CD4-positive, alpha-beta memory T cell (primary cell): ENCODE measurements at regions of chr12 and their contacts with region 1.

Region 1: DNA sequence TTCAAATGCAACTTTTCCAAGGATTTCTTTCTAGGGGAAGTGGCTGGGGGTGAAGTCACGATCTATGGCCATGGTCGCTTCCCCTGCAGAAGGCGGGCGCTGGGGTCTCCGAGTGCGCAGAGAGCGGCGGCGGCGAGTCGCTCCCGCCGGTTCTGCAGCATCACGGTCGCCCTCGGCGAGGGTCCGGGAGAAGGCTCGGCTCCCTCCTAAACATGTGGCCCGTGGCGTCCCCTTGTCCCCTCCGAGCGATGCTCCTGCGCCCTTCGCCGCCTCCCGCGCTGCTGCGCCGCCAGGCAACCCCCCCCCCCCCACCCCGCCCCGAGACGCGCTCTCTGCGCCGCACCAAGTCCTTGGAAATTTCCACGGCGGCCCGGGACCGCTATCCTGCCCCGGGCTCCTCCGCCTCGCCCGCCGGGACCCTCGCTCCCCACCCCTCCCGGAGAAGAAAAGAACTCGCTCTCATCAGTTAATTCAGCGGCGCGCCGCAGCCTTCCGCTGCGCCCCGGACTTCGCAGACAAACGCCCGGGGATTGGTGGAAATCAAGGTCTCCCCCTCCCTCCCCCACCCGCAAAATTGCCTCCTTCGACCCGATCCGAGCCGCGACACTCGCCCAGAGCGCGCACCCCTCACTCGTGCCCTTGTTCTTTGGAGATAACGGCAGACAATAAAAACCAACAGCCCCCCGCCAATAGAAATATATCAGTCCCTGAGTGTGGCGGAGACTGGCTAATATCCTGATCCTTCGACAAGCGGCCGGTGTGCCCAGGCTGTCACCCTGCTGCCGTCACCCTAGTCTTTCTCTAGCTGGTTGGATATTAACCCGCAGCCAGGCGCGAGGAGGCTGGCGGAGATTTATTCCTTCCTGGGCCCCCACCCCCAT is at the start of gene ST8SIA1:
- DNase-seq: peak; percentile 72 to 80 (median 75)
- H3K4me3 ChIP-seq: peak within 1 kb of the TSS; percentile 71 to 93
- H3K4me3 Mint-ChIP-seq: peak within 1 kb of the TSS; percentile 92 to 98 (median 96)
- H3K27ac ChIP-seq: peak within 1 kb of the TSS; percentile 75
- H3K27ac Mint-ChIP-seq: peak within 1 kb of the TSS; percentile 90 to 99 (median 93)
- H3K4me1 ChIP-seq: peaks cover 38% of the 10 kb centered on the region
- H3K4me1 Mint-ChIP-seq: peaks cover 40 to 60% (median 41%) of the 10 kb centered on the region in 4 donors
- H3K27me3 ChIP-seq: no peaks in the 10 kb centered on the region
- H3K27me3 Mint-ChIP-seq: peaks cover 0 to 2% of the 10 kb centered on the region in 2 donors
- total RNA-seq, gene ST8SIA1: 52.2 to 53.6 TPM

Region 2: GRCh38 chr12:22046090-22046967 is 288.3 kb before region 1 on chr12 and contains the start of gene CMAS:
- CTCF ChIA-PET with region 1: interaction called, 7 read pairs
- POLR2A ChIA-PET with region 1: interaction called, 9 read pairs
- intact Hi-C with region 1: loop called (anchors 1 kb)
- DNase-seq: peak; percentile 63 to 81 (median 71)
- H3K4me3 ChIP-seq: peak within 1 kb of the TSS; percentile 87 to 91
- H3K4me3 Mint-ChIP-seq: peak within 1 kb of the TSS; percentile 90 to 98 (median 96)
- H3K27ac ChIP-seq: peak within 1 kb of the TSS; percentile 75
- H3K27ac Mint-ChIP-seq: peak within 1 kb of the TSS; percentile 85 to 95 (median 91)
- H3K4me1 ChIP-seq: peaks cover 35% of the 10 kb centered on the region
- H3K4me1 Mint-ChIP-seq: peaks cover 33 to 50% (median 39%) of the 10 kb centered on the region in 4 donors
- H3K27me3 ChIP-seq: no peaks in the 10 kb centered on the region
- H3K27me3 Mint-ChIP-seq: peaks cover 0 to 1% of the 10 kb centered on the region in 2 donors
- total RNA-seq, gene CMAS: 20.1 to 20.3 TPM

Region 3: DNA sequence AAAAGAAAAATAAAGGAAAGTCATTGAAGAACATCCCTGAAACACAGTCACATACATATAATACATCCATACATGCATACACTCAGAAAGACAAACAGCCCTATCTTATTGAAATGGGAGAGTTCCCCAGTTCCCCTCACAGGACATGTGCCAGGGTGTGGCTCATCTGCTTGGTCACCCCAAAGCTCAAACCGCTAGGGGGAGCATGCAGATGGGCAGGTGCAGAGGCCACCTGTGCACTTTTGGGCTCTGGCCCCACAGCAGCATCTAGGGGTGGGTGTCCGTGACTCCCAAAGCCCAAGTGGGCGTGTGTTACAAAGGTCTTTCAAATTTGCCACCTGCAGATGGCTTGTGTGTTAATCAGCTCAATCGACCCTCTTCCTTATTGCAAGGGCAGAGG is 213.4 kb before region 1 on chr12:
- CTCF ChIA-PET with region 1: interaction called, 23 read pairs
- POLR2A ChIA-PET with region 1: interaction called, 7 read pairs
- intact Hi-C with region 1: loop called (anchors 1 kb)
- DNase-seq: peak in 4 of 5 donors; percentile 21 to 39 (median 28)
- H3K4me3 ChIP-seq: no peak overlapping the region
- H3K4me3 Mint-ChIP-seq: no peak overlapping the region
- H3K27ac ChIP-seq: no peak overlapping the region
- H3K27ac Mint-ChIP-seq: no peak overlapping the region
- H3K4me1 ChIP-seq: no peaks in the 10 kb centered on the region
- H3K4me1 Mint-ChIP-seq: peaks cover 0 to 6% (median 3%) of the 10 kb centered on the region in 4 donors
- H3K27me3 ChIP-seq: no peaks in the 10 kb centered on the region
- H3K27me3 Mint-ChIP-seq: no peaks in the 10 kb centered on the region

Region 4: GRCh38 chr12:22321638-22322037 is 13.0 kb before region 1 on chr12:
- CTCF ChIA-PET with region 1: interaction called, 8 read pairs
- POLR2A ChIA-PET with region 1: interaction called, 9 read pairs
- intact Hi-C with region 1: loop called (anchors 2 kb)
- DNase-seq: peak in 4 of 5 donors; percentile 16 to 54 (median 23)
- H3K4me3 ChIP-seq: no peak overlapping the region
- H3K4me3 Mint-ChIP-seq: peak overlapping the region in 4 of 8 donors; percentile 6 to 55 (median 22)
- H3K27ac ChIP-seq: no peak overlapping the region
- H3K27ac Mint-ChIP-seq: peak overlapping the region in 6 of 7 donors; percentile 9 to 75 (median 66)
- H3K4me1 ChIP-seq: peaks cover 42% of the 10 kb centered on the region
- H3K4me1 Mint-ChIP-seq: peaks cover 41 to 59% (median 50%) of the 10 kb centered on the region in 4 donors
- H3K27me3 ChIP-seq: no peaks in the 10 kb centered on the region
- H3K27me3 Mint-ChIP-seq: no peaks in the 10 kb centered on the region

Region 5: GRCh38 chr12:22409377-22410164 is 74.9 kb after region 1 on chr12:
- CTCF ChIA-PET with region 1: interaction called, 42 read pairs
- POLR2A ChIA-PET with region 1: interaction called, 64 read pairs
- intact Hi-C with region 1: loop called (anchors 1 kb)
- DNase-seq: peak; percentile 73 to 82 (median 75)
- H3K4me3 ChIP-seq: peak overlapping the region in 1 of 2 donors; percentile 51
- H3K4me3 Mint-ChIP-seq: peak overlapping the region; percentile 75 to 92 (median 86)
- H3K27ac ChIP-seq: peak overlapping the region; percentile 62
- H3K27ac Mint-ChIP-seq: peak overlapping the region; percentile 92 to 96 (median 94)
- H3K4me1 ChIP-seq: peaks cover 58% of the 10 kb centered on the region
- H3K4me1 Mint-ChIP-seq: peaks cover 27 to 47% (median 40%) of the 10 kb centered on the region in 4 donors
- H3K27me3 ChIP-seq: no peaks in the 10 kb centered on the region
- H3K27me3 Mint-ChIP-seq: no peaks in the 10 kb centered on the region

Region 6: DNA sequence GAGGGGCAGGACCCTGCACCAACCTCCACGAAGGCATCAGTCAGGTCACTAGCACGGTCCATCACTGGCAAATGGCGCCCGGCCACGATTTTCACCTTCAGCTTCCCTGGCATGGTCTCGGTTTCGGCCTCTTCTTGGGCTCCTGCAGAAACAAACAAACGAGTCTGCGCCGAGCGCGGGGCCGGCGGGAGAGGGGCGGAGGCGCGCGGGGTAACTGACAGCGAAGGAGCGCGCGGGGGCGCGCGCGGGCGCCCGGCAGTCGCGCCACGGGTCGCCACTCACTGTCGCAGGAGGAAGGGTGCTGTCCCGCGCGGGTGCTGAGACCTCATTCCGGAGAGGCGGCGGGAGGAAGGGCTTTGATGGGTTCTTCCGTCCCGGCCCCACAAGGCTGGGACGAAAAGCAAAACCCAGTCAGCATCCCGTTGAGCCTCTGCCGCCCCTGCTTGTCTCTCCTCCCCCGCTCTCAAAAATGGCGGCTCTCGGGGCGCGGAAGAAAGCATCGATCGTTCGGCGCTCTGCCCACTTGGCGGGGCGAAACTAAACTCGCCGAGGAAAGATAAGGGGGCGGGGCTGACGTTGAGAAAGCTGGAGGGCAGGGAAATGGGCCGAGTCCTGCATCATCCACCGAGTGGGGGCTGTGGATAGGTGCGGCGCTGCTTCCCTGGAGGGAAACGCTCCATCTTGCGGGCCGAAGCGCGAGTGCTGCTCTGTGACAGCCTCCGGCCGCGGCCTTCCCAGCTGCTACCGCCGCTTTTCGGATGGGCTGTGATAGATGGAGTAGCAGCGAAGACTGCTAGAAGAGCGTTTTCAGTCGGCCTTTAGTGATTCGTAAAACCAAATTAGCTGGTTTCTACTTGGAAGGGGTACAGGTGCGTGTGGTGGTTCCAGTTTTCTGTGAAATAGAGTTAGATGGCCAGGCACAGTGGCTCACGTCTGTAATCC is 209.7 kb after region 1 on chr12 and contains the start of gene C2CD5:
- CTCF ChIA-PET with region 1: no interaction called
- POLR2A ChIA-PET with region 1: interaction called, 4 read pairs
- intact Hi-C with region 1: loop called (anchors 5 kb)
- DNase-seq: peak; percentile 95 to 98 (median 96)
- H3K4me3 ChIP-seq: peak within 1 kb of the TSS; percentile 87 to 97
- H3K4me3 Mint-ChIP-seq: peak within 1 kb of the TSS; percentile 89 to 98 (median 94)
- H3K27ac ChIP-seq: peak within 1 kb of the TSS; percentile 78
- H3K27ac Mint-ChIP-seq: peak within 1 kb of the TSS; percentile 95 to 97 (median 96)
- H3K4me1 ChIP-seq: peaks cover 44% of the 10 kb centered on the region
- H3K4me1 Mint-ChIP-seq: peaks cover 29 to 45% (median 36%) of the 10 kb centered on the region in 4 donors
- H3K27me3 ChIP-seq: no peaks in the 10 kb centered on the region
- H3K27me3 Mint-ChIP-seq: peaks cover 0 to 4% of the 10 kb centered on the region in 2 donors
- total RNA-seq, gene C2CD5: 59.3 to 59.8 TPM